ENCODE measurements at regions of chr11 and their contacts with region 1.

Region 1: GRCh38 chr11:65662799-65663638 is at the start of gene RELA:
- DNase-seq: peak; percentile 91
- ATAC-seq: peak; percentile 87
- H3K4me3 Mint-ChIP-seq: peak within 1 kb of the TSS; percentile 87
- H3K27ac Mint-ChIP-seq: peak within 1 kb of the TSS; percentile 93
- H3K4me1 Mint-ChIP-seq: peaks cover 35% of the 10 kb centered on the region
- H3K27me3 Mint-ChIP-seq: no peaks in the 10 kb centered on the region
- CTCF ChIP-seq: no peak
- total RNA-seq, gene RELA: 110 and 119 TPM in 2 replicates

Region 2: GRCh38 chr11:65185869-65186341 is 477.1 kb before region 1 on chr11:
- CTCF ChIA-PET with region 1: no interaction called
- POLR2A ChIA-PET with region 1: no interaction called
- intact Hi-C with region 1: no loop called
- DNase-seq: no peak
- ATAC-seq: no peak
- H3K4me3 Mint-ChIP-seq: no peak overlapping the region
- H3K27ac Mint-ChIP-seq: no peak overlapping the region
- H3K4me1 Mint-ChIP-seq: peaks cover 16% of the 10 kb centered on the region
- H3K27me3 Mint-ChIP-seq: no peaks in the 10 kb centered on the region
- CTCF ChIP-seq: no peak

Region 3: DNA sequence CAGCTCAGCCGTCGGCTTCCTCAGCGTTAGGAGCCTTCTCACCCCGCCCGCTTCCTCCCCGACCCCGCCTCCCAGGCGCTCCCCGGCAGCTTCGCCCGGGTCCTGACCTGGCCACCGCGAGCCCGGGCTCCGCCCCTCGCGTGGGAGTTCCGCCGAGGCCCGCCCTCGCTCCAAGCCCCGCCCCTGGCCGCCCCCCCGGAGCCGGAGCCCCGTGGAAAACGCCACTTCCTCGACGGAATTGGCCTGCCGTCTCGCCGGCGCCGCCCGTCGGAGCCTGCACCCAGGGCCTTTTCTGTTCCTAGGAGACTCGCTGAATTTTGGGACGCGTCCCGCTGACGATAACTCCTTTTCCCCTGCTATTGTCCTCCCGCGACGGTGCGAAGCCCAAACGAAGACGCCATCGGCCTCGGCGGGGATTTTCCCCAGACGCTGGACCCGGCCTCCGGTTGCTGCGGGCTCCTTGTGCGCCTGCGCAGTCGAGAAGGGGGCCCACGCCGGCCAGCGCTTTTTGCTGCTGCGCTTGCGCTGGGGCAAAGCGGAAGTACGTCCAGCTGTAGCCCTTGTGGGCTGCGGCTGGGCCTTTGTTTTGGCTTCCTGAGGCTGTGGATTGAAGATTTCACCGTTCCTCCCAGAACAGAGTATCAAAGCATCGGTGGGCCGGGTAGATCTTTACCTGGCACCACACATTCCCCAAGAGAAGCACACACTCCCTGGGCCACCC is 10.3 kb before region 1 on chr11:
- CTCF ChIA-PET with region 1: no interaction called
- POLR2A ChIA-PET with region 1: interaction called, 84 read pairs
- intact Hi-C with region 1: loop called (anchors 1 kb)
- DNase-seq: peak; percentile 98
- ATAC-seq: peak; percentile 89
- H3K4me3 Mint-ChIP-seq: peak overlapping the region; percentile 90
- H3K27ac Mint-ChIP-seq: peak overlapping the region; percentile 95
- H3K4me1 Mint-ChIP-seq: peaks cover 44% of the 10 kb centered on the region
- H3K27me3 Mint-ChIP-seq: no peaks in the 10 kb centered on the region
- CTCF ChIP-seq: no peak

Region 4: DNA sequence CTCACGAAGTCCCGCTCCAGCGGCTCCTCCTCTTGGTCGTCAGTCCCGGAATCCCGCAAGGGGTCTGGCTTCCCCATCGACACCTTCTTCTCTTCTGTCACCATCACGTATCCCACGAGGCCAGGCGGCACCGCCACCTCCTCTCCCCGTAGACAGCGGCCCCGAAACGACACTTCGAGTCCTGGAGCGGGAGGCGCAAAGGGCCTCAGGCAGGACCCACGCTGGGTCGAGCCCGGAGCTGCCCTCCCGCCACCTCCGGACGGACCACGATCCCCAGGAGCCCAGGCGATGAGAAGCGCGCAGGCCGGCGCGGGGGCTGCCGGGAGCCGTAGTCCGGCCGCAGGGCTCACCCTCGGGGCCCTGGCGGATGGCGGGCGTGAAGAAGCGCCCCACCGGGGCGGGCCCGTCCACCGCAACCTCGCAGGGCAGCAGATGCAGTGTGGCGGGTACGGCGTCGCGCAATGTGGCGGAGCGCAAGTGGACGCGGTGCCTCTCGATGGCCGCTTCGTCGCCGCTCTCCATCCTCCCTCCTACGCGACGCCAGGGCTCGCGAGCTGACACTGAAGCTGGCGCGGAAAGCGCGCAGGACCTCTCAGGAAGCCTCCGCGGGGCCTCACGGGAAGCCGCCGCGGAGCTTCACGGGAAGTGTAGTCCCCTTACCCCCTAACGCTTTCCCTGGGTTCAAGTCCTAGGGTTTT is 57.4 kb after region 1 on chr11 and contains the start of gene RNASEH2C:
- CTCF ChIA-PET with region 1: no interaction called
- POLR2A ChIA-PET with region 1: interaction called, 11 read pairs
- intact Hi-C with region 1: no loop called
- DNase-seq: peak; percentile 75
- ATAC-seq: peak; percentile 92
- H3K4me3 Mint-ChIP-seq: peak within 1 kb of the TSS; percentile 94
- H3K27ac Mint-ChIP-seq: peak within 1 kb of the TSS; percentile 83
- H3K4me1 Mint-ChIP-seq: peaks cover 29% of the 10 kb centered on the region
- H3K27me3 Mint-ChIP-seq: no peaks in the 10 kb centered on the region
- CTCF ChIP-seq: no peak
- total RNA-seq, gene RNASEH2C: 85.3 and 91.4 TPM in 2 replicates

Region 5: DNA sequence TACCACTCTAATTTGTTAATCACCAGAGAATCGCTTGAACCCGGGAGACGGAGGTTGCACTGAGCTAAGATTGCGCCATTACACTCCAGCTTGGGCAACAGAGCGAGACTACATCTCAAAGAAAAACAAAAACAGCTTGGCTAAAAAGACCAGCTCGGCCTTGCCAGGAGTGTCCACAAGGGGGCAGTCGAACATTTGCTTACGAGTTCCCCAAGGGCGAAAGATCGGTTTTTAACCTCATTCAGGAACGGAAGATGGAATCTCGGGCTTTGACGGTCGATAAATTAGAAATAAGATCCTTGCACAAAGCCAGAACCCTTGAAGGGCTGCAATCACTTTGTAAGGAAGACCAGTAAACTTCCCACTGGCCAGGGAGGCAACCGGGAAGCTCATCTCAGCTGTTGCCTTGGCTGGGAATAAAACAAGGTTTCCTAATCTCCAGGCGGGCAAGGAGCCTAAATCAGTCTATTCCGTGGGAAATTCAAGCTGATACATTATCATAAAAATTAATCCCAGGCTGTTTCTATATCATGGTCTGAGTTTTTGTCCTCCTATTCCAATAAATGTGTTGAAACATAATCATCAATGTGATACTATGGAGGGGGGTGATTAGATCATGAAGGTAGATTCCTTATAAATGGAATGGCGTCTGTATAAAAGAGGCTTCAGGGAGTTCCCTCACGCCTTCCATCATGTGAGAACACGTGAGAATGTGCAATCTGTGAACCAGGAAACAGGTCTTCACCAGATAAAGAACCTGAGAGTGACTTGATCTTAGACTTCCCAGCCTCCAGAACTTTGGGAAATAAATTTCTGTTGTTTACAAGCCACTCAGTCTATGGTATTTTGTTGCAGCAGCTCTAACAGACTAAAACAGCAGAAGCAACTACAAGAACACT is 723.4 kb after region 1 on chr11:
- CTCF ChIA-PET with region 1: no interaction called
- POLR2A ChIA-PET with region 1: no interaction called
- intact Hi-C with region 1: no loop called
- DNase-seq: peak; percentile 68
- ATAC-seq: peak; percentile 84
- H3K4me3 Mint-ChIP-seq: peak overlapping the region; percentile 17
- H3K27ac Mint-ChIP-seq: no peak overlapping the region
- H3K4me1 Mint-ChIP-seq: peaks cover 9% of the 10 kb centered on the region
- H3K27me3 Mint-ChIP-seq: no peaks in the 10 kb centered on the region
- CTCF ChIP-seq: no peak

Measured in activated B cell treated with CpG ODN at 0.5 μM for 24 hours (primary cell).